Left ventricle myocardium inferior (tissue), 1 donor: ENCODE measurements at regions of chr1 and their contacts with region 1.

Region 1: DNA sequence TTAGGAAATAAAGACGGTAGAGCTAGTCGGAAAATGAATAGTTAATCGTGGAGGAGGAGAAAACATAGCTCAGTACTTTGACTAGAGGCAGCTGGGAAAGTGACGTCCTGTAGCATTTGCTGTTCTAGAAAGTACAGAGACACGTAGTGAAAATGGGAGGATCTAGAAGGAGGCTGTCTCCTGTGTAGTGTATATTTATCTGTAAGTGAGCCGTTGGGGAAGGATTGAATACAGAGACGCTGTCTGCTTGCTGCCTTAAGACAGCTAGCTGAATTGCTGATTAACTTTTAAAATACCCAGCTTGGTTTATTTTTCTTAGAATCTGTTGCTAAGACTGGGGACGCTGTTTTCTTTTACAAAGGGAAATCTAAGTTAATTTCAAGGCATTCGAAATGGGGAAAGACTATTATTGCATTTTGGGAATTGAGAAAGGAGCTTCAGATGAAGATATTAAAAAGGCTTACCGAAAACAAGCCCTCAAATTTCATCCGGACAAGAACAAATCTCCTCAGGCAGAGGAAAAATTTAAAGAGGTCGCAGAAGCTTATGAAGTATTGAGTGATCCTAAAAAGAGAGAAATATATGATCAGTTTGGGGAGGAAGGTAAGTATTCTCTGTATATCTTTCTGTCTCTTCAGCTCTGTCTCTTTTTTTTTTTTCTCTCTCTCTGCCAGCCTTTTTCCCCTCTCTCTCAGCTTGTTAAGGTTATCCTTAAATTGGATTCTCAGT is at the start of gene DNAJB4:
- DNase-seq: no peak
- H3K4me3 ChIP-seq: peak within 1 kb of the TSS; percentile 77
- H3K27ac ChIP-seq: peak within 1 kb of the TSS; percentile 93
- H3K4me1 ChIP-seq: peaks cover 57% of the 10 kb centered on the region
- H3K27me3 ChIP-seq: no peaks in the 10 kb centered on the region
- CTCF ChIP-seq: no peak
- total RNA-seq, gene DNAJB4: 118 TPM

Region 2: DNA sequence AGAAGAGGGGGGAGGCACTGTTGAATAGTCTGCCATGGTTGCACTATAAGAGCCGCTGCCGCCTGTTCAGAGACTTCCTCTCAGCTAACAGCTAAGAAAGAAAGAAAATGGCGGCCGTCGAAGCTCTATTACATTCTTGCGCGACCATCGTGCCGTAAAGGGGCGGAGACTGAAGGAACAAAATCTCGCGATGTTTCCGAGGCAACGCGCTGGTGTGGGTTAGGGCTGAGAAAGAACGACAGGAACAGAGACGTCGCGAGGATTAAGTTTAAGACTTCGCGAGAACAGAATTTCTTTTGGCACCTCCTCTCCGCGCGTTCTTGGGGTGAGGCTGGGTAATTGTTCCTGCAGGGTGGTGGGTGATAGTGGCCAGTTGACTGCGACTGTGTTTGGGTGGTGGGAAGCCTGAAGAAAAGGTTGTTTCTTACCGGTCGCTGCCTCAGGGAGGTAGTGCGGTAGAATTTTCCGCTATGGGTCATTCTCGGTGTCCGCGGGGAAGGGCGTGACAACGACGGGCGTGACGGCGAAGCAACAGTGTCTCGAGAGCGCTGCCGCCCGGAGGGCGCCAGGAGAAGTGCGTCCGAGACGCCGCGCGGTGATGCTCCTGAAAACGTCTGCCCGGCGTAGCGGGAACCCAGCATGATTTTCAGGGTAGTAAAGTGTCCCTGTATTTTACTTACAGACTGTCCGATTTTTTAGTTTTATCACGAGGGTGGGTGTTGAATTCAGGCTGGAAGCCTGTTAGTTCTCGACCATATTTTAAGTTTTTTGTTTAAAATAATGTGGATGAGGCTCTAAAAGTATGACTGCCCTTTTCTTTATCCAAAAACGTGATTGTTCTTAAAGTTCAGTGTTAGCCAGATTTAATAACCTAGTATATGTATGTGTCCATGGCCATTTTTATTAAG is 25.7 kb before region 1 on chr1 and contains the start of gene FUBP1:
- intact Hi-C with region 1: loop called (anchors 2 kb)
- DNase-seq: peak; percentile 91
- H3K4me3 ChIP-seq: peak within 1 kb of the TSS; percentile 75
- H3K27ac ChIP-seq: peak within 1 kb of the TSS; percentile 99
- H3K4me1 ChIP-seq: peaks cover 72% of the 10 kb centered on the region
- H3K27me3 ChIP-seq: no peaks in the 10 kb centered on the region
- CTCF ChIP-seq: peak; percentile 88
- total RNA-seq, gene FUBP1: 55.7 TPM

Region 3: DNA sequence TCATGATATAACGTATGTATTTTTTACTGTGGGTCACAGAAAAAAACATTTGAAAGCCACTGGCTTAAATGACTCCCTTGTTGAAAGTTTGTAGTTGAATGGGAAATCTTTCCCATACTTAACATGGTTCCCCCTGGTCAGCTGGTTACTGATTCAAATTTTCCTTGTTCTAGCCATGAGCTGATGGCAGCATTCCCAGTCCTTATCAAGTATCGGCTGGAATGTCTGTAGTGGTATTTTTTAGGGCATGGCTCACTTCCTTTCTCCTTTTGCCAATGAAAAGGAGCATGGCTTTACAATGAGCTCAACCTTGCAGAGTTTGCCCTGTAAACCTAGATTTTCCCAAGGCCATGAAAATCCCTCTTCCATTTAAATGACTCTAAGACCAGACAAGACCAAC is 96.6 kb after region 1 on chr1:
- intact Hi-C with region 1: loop called (anchors 10 kb)
- DNase-seq: no peak
- H3K4me3 ChIP-seq: no peak overlapping the region
- H3K27ac ChIP-seq: peak overlapping the region; percentile 73
- H3K4me1 ChIP-seq: peaks cover 49% of the 10 kb centered on the region
- H3K27me3 ChIP-seq: no peaks in the 10 kb centered on the region
- CTCF ChIP-seq: no peak